MCF 10A (cell line): ENCODE measurements at regions of chr1 and their contacts with region 1.

Region 1: GRCh38 chr1:202576816-202577215 is 133.4 kb downstream of the SYT2 start:
- DNase-seq: peak; percentile 94
- H3K4me3 Mint-ChIP-seq: no peak overlapping the region
- H3K27ac Mint-ChIP-seq: peak overlapping the region; percentile 68
- H3K4me1 Mint-ChIP-seq: peaks cover 41% of the 10 kb centered on the region
- H3K27me3 Mint-ChIP-seq: no peaks in the 10 kb centered on the region
- CTCF ChIP-seq: no peak

Region 2: GRCh38 chr1:202589190-202590030 is 12.6 kb after region 1 on chr1:
- CTCF ChIA-PET with region 1: interaction called, 23 read pairs
- POLR2A ChIA-PET with region 1: interaction called, 146 read pairs
- intact Hi-C with region 1: no loop called
- DNase-seq: peak; percentile 99
- H3K4me3 Mint-ChIP-seq: peak overlapping the region; percentile 20
- H3K27ac Mint-ChIP-seq: peak overlapping the region; percentile 91
- H3K4me1 Mint-ChIP-seq: peaks cover 82% of the 10 kb centered on the region
- H3K27me3 Mint-ChIP-seq: no peaks in the 10 kb centered on the region
- CTCF ChIP-seq: peak; percentile 18